ENCODE measurements at regions of chr20 and their contacts with region 1.

Region 1: GRCh38 chr20:4544765-4545164 is 176.9 kb upstream of the PRND start:
- DNase-seq: no peak
- H3K4me3 ChIP-seq: no peak overlapping the region
- H3K27ac ChIP-seq: no peak overlapping the region
- H3K4me1 ChIP-seq: no peaks in the 10 kb centered on the region
- H3K27me3 ChIP-seq: no peaks in the 10 kb centered on the region
- CTCF ChIP-seq: no peak
- EP300 ChIP-seq: no peak
- POLR2A ChIP-seq: no peak

Region 2: DNA sequence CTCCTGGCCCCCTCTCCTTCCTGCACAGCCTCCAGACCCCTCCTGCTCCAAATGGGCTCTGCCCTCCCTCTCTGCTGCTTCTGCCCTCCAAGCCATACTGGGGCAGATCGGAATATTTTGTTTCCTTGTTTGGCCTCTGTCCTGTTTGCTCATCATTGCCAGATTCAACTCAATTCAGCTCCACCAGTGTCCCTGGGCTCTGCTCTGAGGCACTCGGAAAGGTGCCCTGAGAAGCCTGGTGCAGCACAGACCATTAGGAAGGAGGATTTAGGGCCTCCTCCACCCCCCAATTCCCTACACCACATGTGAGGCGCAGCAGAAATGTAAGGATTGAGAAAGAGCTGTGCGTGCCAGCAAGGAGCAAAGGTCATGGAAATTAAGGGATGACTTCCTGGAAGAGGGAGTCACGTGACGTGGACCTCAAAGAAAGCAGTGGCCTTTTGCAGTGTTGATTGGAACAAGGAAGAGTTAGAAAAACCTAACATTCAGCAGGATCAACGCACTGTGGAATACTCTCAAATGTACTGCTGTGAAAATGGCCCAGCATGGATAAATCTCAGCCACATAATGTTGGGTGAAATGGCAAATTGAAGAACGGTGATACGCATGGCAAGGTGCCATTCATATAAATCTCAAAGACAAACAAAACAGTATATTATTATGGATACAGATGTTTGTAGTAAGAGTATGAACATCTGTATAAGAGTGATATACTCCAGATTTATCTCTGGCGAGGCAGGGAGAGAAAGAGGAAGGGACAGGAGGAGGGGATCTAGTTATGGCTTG is 299.9 kb before region 1 on chr20:
- intact Hi-C with region 1: loop called in 1 of 4 experiments (anchors 5 kb)
- DNase-seq: peak in 1 of 5 donors; percentile 53
- H3K4me3 ChIP-seq: no peak overlapping the region
- H3K27ac ChIP-seq: no peak overlapping the region
- H3K4me1 ChIP-seq: peaks cover 2% of the 10 kb centered on the region
- H3K27me3 ChIP-seq: no peaks in the 10 kb centered on the region
- CTCF ChIP-seq: no peak
- EP300 ChIP-seq: no peak
- POLR2A ChIP-seq: no peak

Region 3: DNA sequence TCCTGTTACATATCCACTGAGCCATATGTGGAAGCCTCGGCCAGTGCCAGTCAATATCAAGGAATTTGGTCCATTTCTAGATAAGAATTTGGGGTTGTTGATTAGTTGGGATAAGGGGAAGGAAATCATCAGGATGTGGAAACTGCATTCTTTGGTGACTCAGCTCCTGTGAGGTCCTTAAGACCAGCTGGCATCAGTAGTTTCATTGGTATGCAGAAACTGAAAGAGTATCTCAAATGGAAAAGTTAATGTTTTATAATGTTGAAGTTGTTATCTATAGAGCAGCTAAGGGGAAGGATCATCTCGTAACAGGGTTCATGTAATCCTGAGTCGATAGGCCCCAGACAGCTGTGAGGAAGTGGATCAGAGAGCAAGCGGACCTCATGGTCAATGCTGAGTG is 89.0 kb after region 1 on chr20:
- intact Hi-C with region 1: no loop called
- DNase-seq: no peak
- H3K4me3 ChIP-seq: no peak overlapping the region
- H3K27ac ChIP-seq: no peak overlapping the region
- H3K4me1 ChIP-seq: no peaks in the 10 kb centered on the region
- H3K27me3 ChIP-seq: no peaks in the 10 kb centered on the region
- CTCF ChIP-seq: no peak
- EP300 ChIP-seq: no peak
- POLR2A ChIP-seq: no peak